Natural killer cell (primary cell): ENCODE measurements at regions of chr11 and their contacts with region 1.

Region 1: DNA sequence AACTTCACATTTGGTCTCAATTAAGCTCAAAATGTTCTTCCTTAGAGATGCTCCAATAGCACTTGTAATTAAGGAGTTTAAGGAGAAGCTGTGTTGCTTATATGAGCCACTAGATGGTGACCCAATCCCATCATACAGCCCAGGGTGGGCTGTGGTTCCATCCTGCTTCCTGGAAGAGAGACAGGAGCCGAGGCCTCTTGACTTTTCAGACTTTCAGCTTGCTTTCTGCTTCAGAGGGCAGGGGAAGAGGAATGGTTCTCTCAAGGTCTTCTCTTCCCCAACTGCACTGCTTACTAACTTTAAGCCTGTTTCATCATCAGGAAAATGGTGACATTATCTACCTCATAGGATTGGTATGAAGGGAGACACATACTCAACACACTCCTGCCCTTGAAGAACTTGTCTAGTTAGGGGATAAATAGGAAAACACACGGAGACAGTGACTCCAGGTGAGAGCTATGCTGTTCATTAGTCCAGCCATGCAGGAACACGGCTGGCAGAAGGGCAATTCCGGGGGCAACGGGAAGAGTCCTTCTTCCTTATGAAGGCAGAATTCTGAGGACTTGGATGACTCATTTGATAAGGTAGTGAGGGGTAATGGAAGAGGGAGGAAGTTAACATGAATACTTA is 20.1 kb downstream of the TMEM218 start:
- DNase-seq: peak in 1 of 2 donors; percentile 47
- ATAC-seq: peak in 2 of 3 donors; percentile 38 to 61
- H3K4me3 ChIP-seq: no peak overlapping the region
- H3K4me3 Mint-ChIP-seq: no peak overlapping the region
- H3K27ac ChIP-seq: no peak overlapping the region
- H3K27ac Mint-ChIP-seq: peak overlapping the region in 1 of 2 donors; percentile 23
- H3K4me1 ChIP-seq: no peaks in the 10 kb centered on the region
- H3K4me1 Mint-ChIP-seq: peaks cover 0 to 6% of the 10 kb centered on the region in 2 donors
- H3K27me3 ChIP-seq: no peaks in the 10 kb centered on the region
- H3K27me3 Mint-ChIP-seq: no peaks in the 10 kb centered on the region
- CTCF ChIP-seq: peak; percentile 27

Region 2: DNA sequence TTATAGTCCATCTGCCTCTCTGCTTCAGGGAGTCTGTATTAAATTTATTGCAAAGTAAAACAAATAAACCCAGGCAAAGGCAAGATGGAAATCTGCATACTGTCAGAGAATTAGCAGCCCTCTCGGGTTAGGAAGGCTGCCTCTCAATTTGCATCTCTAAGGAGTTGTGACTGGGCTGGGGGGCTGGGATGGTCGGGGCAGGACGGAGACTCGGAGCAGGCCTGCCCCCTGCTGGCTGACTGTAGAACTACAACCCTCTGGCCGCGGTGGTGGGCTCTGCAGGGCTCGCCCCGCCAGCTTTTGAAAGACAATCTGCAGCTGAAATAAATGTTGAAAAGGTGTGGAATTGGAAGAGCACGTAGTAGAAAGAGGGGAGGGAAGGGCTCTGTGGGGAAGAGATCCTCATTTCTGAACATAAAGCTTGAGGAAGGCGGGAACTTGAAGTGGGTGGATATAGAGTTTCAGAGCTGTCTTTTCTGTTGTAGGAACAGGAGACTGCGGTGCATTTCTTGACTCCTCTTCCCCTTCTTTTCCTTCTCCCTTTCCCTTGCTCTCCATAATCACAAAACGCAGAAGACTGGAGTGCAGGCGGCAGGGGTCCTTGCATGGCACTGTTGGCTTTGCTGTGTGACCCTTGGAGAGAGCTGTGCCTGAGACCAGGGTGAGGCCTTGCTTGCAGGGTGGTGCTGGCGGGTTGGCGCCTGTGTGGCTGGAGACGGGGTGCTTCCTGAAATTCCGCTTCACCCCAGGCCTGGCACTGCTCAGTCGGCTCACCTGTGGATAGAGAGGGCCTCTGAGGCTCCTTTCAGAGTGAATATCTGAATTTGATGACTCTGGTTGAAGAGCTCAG is 50.5 kb after region 1 on chr11:
- intact Hi-C with region 1: loop called (anchors 1 kb)
- DNase-seq: peak; percentile 58 to 75
- ATAC-seq: peak; percentile 87 to 99 (median 96)
- H3K4me3 ChIP-seq: no peak overlapping the region
- H3K4me3 Mint-ChIP-seq: no peak overlapping the region
- H3K27ac ChIP-seq: no peak overlapping the region
- H3K27ac Mint-ChIP-seq: no peak overlapping the region
- H3K4me1 ChIP-seq: peaks cover 4% of the 10 kb centered on the region
- H3K4me1 Mint-ChIP-seq: peaks cover 6% of the 10 kb centered on the region in 2 donors
- H3K27me3 ChIP-seq: peaks cover 5% of the 10 kb centered on the region
- H3K27me3 Mint-ChIP-seq: peaks cover 28 to 44% of the 10 kb centered on the region in 2 donors
- CTCF ChIP-seq: peak; percentile 99

Region 3: GRCh38 chr11:125345421-125346178 is 254.2 kb after region 1 on chr11:
- intact Hi-C with region 1: loop called (anchors 5 kb)
- DNase-seq: peak in 1 of 2 donors; percentile 54
- ATAC-seq: peak in 1 of 3 donors; percentile 62
- H3K4me3 ChIP-seq: no peak overlapping the region
- H3K4me3 Mint-ChIP-seq: no peak overlapping the region
- H3K27ac ChIP-seq: no peak overlapping the region
- H3K27ac Mint-ChIP-seq: no peak overlapping the region
- H3K4me1 ChIP-seq: no peaks in the 10 kb centered on the region
- H3K4me1 Mint-ChIP-seq: peaks cover 0 to 5% of the 10 kb centered on the region in 2 donors
- H3K27me3 ChIP-seq: no peaks in the 10 kb centered on the region
- H3K27me3 Mint-ChIP-seq: peaks cover 13 to 14% of the 10 kb centered on the region in 2 donors
- CTCF ChIP-seq: peak; percentile 53